ENCODE measurements at regions of chr19 and their contacts with region 1.

Region 1: DNA sequence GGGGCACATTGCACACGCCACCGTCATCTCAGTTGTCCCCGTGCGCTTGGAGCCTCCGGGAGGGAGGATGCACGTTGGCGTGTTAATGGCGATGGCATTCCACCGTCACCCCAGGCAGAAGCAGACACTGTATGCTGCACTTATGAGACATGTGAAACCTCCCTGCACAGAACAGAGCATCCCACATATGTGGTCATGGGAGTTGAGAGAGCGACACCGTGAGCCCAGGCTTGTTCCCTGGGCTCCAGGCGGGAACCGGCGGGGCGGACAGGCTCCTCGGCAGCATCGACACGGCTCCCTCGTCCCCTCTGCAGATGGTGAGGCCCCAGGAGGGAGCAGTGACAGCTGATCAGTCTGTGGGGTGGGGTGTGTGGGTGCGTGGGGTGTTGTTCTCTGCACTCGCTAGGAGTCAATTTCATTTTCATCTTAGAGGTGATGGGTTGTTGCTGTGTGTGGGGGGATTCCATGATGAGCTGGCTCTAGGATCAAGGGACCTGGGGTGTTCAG is 40.4 kb downstream of the CRTC1 start:
- DNase-seq: no peak

Region 2: DNA sequence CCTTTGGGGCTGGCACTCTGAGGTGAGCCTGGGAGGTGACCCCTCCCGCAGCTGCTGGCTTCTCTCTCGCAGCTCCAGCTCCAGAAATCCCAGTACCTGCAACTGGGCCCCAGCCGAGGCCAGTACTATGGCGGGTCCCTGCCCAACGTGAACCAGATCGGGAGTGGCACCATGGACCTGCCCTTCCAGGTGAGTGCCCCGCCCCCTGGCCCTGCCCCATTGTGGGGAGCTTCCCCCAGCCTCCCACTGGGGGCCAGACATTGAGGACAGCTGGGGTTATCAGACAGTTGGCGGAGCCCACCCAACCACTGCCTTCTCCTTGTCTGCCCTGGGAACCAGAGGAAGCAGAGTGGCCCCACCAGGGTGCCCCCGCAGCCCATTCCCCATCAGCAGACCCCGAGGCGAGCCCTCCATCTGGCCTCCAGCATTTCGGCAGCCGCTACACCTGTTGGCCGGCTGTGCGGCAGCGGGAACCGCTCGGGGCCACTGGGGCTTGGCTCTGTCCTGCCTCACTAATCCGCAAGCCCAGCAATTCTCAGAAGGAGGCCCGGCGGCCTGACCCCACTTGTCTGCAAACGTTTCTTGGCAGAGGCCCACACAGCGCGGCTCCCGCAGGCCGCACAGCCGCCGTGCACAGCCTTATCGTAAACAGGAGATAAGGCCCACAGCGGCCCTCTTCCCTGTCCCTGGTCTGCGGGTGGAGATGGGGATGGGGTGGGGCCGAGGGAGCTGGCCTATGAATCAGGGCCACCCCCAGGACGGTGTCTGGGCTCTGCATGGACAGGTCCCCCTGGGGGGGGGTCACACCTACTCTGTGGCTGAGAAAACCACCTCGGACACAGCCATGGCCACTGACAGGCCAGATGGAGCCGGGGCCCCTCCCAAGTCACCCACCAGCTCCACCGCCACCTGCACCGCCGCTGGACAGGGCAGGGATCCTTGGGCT is 19.2 kb after region 1 on chr19:
- intact Hi-C with region 1: loop called in 1 of 2 experiments (anchors 1 kb)
- DNase-seq: no peak